SK-N-SH (cell line): ENCODE measurements at regions of chr12 and their contacts with region 1.

Region 1: DNA sequence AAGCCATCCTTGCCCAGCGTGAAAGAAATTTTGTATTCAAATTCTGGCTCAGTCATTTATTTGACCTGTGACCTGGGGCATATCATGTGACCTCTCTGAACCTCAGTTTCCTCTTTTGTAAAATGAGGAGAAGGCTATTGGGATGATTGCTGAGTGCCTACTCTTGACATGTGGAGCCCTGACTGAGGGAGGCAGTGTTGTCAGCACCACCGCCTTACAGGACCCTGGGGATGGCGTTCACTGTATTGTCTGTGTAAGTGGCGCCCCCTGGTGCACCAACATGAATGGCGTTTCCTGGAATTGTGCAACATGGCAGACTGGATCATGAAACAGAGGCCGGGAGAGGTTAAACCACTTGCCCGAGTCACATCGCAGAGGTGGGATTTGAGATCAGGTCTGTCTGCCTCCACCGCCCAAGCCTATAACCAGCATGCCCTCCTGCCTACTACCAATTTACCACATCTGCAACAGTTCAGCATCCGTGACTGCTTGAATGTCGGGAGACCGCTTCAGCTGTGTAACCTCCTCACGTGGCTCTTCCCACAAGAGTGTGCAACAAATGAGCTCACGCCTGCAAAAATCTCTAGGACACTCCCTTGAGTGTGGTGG is 20.1 kb upstream of the CCDC63 start:
- DNase-seq: peak; percentile 82
- H3K4me3 ChIP-seq: no peak overlapping the region; a peak in 1 of 4 replicates
- H3K27ac ChIP-seq: no peak overlapping the region
- H3K4me1 ChIP-seq: no peaks in the 10 kb centered on the region; a peak in 1 of 4 replicates
- H3K27me3 ChIP-seq: no peaks in the 10 kb centered on the region
- CTCF ChIP-seq: peak; percentile 86
- EP300 ChIP-seq: no peak
- RAD21 ChIP-seq: peak; percentile 95

Region 2: DNA sequence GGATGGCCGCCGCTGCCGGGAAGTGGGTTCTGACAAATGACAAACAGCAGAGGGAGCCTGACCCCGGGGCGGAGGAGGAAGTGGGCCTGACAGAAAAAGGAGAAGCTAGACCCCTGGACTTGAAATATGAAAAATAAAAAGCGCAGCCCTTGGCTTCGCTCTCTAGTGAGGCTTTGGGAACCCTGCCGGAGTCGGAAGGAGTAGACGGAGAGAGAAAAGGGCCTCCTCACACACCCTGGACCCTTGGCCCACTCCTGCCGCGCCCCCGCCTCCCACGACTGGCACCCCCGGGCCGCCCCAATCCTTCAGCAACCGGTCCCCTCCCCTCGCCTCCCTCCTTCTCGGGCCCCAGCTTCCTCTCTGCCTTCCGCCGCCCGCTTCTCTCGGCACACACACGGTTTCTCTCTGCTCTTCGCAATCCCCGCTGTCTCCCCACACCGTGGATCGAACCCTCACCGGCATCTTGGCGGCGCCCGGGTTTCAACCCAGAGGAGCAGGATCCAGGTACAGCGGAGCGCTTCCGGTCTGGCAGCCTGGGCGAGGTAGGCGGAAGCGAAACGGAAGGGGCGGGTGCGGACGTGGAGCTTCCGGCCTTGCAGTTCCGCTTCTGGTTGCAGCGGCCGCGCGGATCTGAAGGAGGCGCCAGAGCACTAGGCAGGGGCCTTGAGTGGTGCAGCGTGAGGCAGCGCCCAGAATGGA is 376.7 kb before region 1 on chr12 and contains the start of gene ARPC3:
- CTCF ChIA-PET with region 1: interaction called, 11 read pairs
- POLR2A ChIA-PET with region 1: no interaction called
- DNase-seq: peak; percentile 93
- H3K4me3 ChIP-seq: peak within 1 kb of the TSS; percentile 71 to 87
- H3K27ac ChIP-seq: peak within 1 kb of the TSS; percentile 90 to 93
- H3K4me1 ChIP-seq: no peaks in the 10 kb centered on the region; a peak in 1 of 4 replicates
- H3K27me3 ChIP-seq: no peaks in the 10 kb centered on the region
- CTCF ChIP-seq: peak; percentile 85
- EP300 ChIP-seq: no peak
- RAD21 ChIP-seq: peak; percentile 85
- polyA plus RNA-seq, gene ARPC3: 50.5 and 74.7 TPM in 2 replicates

Region 3: DNA sequence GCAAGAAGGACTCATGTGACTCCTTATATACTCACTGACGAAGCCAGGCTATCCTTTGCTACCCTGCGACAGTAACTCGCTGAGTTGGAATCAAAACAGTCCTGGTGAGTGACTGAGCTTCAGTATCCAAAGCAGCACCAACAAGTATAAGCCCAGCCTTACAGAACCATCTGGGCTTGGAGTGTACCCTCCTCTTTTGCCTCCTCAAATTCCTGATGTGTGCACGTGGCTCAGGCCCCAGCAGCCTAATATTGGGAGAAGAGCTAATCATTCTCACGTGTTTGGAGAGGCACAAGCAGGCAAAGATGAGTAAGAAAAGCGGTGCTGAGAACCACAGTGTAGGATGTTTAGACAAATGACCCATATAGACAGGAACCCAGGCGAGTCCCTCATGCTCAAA is 278.0 kb before region 1 on chr12:
- CTCF ChIA-PET with region 1: interaction called, 13 read pairs
- POLR2A ChIA-PET with region 1: no interaction called
- DNase-seq: no peak
- H3K4me3 ChIP-seq: no peak overlapping the region
- H3K27ac ChIP-seq: peak overlapping the region in 1 of 2 experiments; percentile 5; a peak in 1 of 4 replicates
- H3K4me1 ChIP-seq: peaks cover 3 to 21% of the 10 kb centered on the region in 2 experiments; a peak in 3 of 4 replicates
- H3K27me3 ChIP-seq: no peaks in the 10 kb centered on the region
- CTCF ChIP-seq: no peak
- EP300 ChIP-seq: no peak
- RAD21 ChIP-seq: no peak

Region 4: GRCh38 chr12:110846615-110847566 is 20.2 kb after region 1 on chr12 and contains the start of gene CCDC63:
- CTCF ChIA-PET with region 1: interaction called, 12 read pairs
- POLR2A ChIA-PET with region 1: no interaction called
- DNase-seq: peak; percentile 86
- H3K4me3 ChIP-seq: peak within 1 kb of the TSS in 1 of 2 experiments; percentile 24; a peak in 1 of 4 replicates
- H3K27ac ChIP-seq: no peak within 1 kb of the TSS
- H3K4me1 ChIP-seq: peaks cover 3 to 7% of the 10 kb centered on the region in 2 experiments; a peak in 1 of 4 replicates
- H3K27me3 ChIP-seq: no peaks in the 10 kb centered on the region
- CTCF ChIP-seq: peak; percentile 45
- EP300 ChIP-seq: no peak
- RAD21 ChIP-seq: peak; percentile 48
- polyA plus RNA-seq, gene CCDC63: not detected in 2 replicates